Activated CD4-positive, alpha-beta memory T cell treated with anti-CD3 and anti-CD28 coated beads, Interleukin-2, amount 10 ng/mL, durations not matched to agents 7 days and 5 days (primary cell): ENCODE measurements at regions of chr1 and their contacts with region 1.

Region 1: GRCh38 chr1:231757101-231757404 is 130.5 kb downstream of the DISC1 start:
- DNase-seq: no peak
- H3K4me3 Mint-ChIP-seq: no peak overlapping the region
- H3K27ac Mint-ChIP-seq: no peak overlapping the region
- H3K4me1 Mint-ChIP-seq: no peaks in the 10 kb centered on the region
- H3K27me3 Mint-ChIP-seq: no peaks in the 10 kb centered on the region

Region 2: GRCh38 chr1:231734417-231734816 is 22.6 kb before region 1 on chr1:
- CTCF ChIA-PET with region 1: interaction called, 12 read pairs
- POLR2A ChIA-PET with region 1: no interaction called
- DNase-seq: peak; percentile 22
- H3K4me3 Mint-ChIP-seq: no peak overlapping the region
- H3K27ac Mint-ChIP-seq: no peak overlapping the region
- H3K4me1 Mint-ChIP-seq: no peaks in the 10 kb centered on the region
- H3K27me3 Mint-ChIP-seq: no peaks in the 10 kb centered on the region

Region 3: DNA sequence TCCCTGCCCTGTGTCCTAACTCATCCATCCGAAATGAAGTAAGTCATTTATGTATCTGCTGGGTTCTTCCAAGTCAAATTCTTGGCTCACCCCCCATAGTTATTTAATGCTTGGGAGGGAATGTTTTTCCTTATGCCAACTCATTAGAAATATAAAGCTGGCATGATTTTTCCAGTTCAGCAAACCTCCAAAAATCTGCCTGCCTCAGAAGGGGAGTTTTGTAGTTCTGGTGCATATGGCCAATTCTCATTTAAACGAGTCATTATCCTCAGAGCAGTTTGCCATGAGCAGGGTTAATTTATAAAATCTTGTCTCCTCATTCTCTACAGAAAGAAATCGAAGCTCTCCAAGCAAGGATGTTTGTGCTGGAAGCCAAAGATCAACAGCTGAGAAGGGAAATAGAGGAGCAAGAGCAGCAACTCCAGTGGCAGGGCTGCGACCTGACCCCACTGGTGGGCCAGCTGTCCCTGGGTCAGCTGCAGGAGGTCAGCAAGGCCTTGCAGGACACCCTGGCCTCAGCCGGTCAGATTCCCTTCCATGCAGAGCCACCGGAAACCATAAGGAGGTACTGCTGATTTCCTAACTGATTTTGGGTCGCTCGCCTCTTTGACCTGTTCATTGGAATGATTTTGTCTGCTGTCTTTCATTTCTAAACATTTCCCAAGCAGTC is 13.6 kb after region 1 on chr1:
- CTCF ChIA-PET with region 1: interaction called, 43 read pairs
- POLR2A ChIA-PET with region 1: no interaction called
- DNase-seq: no peak
- H3K4me3 Mint-ChIP-seq: no peak overlapping the region
- H3K27ac Mint-ChIP-seq: no peak overlapping the region
- H3K4me1 Mint-ChIP-seq: no peaks in the 10 kb centered on the region
- H3K27me3 Mint-ChIP-seq: no peaks in the 10 kb centered on the region

Region 4: DNA sequence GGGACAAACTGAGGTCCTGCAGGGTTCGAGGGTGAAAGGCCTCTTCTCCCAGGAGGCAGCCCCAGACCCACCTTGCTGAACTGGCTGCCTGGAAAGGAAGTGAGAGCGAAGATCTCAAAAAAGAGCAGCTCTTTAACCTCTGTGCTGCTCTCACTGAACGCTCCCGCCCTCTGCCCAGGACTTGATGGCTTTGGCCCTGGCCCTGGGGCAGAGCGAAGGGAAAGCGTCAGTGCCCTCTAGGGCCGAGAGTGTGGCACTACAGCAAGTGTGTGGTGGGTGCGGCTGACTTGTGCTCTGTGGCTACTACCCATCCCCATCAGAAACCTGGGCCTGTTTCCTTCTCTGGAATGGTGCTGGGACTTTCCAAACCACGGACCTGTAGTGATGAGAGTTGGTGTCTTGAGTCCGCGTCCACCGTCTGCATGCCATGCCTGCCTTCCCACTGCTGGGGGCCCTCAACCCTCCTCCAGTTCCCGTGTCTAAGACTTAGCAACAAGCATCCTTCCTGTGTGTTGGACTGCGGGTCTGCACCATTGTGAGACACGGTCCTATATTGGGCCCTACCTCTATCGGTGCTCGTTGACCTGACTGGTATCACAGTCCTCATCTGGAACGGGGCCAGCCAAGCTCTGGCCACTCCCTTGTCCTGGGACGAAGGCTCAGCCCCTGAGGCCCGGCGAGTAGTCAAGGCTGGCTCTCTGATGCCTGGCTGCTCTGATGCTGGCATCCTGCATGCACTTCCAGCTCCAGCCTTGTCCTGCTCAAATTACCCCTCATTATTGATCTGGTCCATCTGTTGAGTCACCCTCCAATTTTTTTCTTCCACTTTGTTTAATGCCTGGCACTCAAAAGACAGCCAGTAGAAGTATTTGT is 49.8 kb after region 1 on chr1:
- CTCF ChIA-PET with region 1: interaction called, 11 read pairs
- POLR2A ChIA-PET with region 1: no interaction called
- DNase-seq: peak; percentile 36
- H3K4me3 Mint-ChIP-seq: no peak overlapping the region
- H3K27ac Mint-ChIP-seq: no peak overlapping the region
- H3K4me1 Mint-ChIP-seq: no peaks in the 10 kb centered on the region
- H3K27me3 Mint-ChIP-seq: no peaks in the 10 kb centered on the region

Region 5: DNA sequence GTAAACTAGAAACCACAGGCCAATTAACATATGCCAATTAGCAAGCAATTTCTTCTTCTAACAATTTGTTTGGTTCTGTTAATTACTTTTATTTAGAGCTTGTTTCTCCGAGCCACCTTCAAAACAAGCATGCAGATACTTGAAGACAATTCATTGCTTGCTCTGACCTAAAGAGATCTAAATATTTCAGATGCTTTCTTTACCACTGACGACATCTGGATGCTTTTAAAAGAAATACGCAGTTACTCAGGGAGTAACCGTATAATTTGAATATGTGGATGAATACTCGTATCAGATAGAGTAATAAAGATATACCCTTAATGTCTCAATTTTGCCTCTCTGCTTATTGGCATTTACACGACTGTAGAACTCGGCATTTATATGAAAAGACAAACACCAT is 259.6 kb after region 1 on chr1:
- CTCF ChIA-PET with region 1: no interaction called
- POLR2A ChIA-PET with region 1: no interaction called
- DNase-seq: no peak
- H3K4me3 Mint-ChIP-seq: no peak overlapping the region
- H3K27ac Mint-ChIP-seq: no peak overlapping the region
- H3K4me1 Mint-ChIP-seq: no peaks in the 10 kb centered on the region
- H3K27me3 Mint-ChIP-seq: no peaks in the 10 kb centered on the region

Region 6: DNA sequence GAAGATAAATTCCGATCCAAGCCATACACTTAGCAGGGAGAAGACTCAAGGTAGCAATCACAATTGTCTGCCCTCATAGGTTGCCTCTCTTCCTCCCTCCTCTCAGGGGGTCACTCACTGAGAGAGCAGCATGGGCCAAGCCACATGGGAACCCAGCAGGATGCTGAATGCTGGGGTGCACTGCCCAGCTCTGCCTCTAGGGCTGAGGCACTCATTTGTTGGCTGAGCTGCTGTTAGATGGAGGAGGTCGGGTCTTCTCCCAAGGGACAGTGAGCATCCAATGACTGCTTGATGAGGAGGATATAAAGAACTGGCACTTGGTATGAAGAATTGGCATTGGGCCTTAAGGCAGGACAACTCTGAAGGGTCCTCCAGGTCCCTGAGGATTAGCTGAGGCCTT is 454.1 kb after region 1 on chr1:
- CTCF ChIA-PET with region 1: no interaction called
- POLR2A ChIA-PET with region 1: no interaction called
- DNase-seq: no peak
- H3K4me3 Mint-ChIP-seq: no peak overlapping the region
- H3K27ac Mint-ChIP-seq: no peak overlapping the region
- H3K4me1 Mint-ChIP-seq: no peaks in the 10 kb centered on the region
- H3K27me3 Mint-ChIP-seq: no peaks in the 10 kb centered on the region